CD8-positive, alpha-beta memory T cell (primary cell): ENCODE measurements at regions of chr15 and their contacts with region 1.

Region 1: DNA sequence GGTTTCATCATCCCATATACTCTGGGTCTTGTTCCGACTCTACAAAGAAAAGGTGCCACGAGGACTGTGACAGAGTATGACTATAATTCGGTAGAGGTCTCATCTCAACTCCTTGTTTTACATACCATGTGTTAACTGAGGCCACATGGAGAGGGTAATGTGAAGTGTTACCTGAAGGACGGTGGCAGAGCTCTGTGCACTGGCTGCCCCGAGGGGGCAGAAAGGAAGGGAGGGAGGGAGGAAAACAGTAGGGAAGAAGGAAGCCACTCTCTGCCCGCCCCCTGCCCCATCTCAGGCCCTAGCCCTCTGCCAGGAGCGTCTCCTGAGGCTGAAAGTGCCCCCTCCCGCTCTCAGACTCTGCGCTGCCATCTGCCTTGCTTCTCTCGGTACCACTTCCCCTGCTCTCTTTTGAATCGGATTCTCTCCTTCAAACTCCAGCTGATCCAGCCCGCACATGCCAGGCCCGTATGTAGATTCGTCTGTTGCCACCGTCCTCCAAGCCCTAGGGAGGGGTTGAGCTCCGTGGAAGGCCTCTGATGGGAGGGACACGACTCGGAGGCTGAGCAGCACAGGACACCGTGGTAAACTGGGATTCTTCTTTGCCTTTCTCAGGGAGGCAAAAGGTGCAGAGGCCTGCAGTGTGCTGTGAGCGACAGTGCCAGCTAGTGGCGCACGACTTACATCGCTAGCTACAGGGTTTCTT is 70.5 kb upstream of the ATP10A start:
- DNase-seq: peak; percentile 25 to 77 (median 51)
- H3K4me3 ChIP-seq: peak overlapping the region; percentile 62
- H3K4me3 Mint-ChIP-seq: peak overlapping the region; percentile 76 to 93 (median 85)
- H3K27ac ChIP-seq: no peak overlapping the region
- H3K27ac Mint-ChIP-seq: peak overlapping the region in 1 of 8 donors; percentile 73
- H3K4me1 ChIP-seq: no peaks in the 10 kb centered on the region
- H3K4me1 Mint-ChIP-seq: peaks cover 3 to 7% (median 7%) of the 10 kb centered on the region in 3 donors
- H3K27me3 ChIP-seq: no peaks in the 10 kb centered on the region
- H3K27me3 Mint-ChIP-seq: peaks cover 5 to 9% of the 10 kb centered on the region in 2 donors

Region 2: GRCh38 chr15:25693321-25694237 is 240.0 kb before region 1 on chr15:
- CTCF ChIA-PET with region 1: interaction called, 11 read pairs
- POLR2A ChIA-PET with region 1: no interaction called
- DNase-seq: peak in 2 of 5 donors; percentile 7 to 11
- H3K4me3 ChIP-seq: no peak overlapping the region
- H3K4me3 Mint-ChIP-seq: no peak overlapping the region
- H3K27ac ChIP-seq: no peak overlapping the region
- H3K27ac Mint-ChIP-seq: no peak overlapping the region
- H3K4me1 ChIP-seq: no peaks in the 10 kb centered on the region
- H3K4me1 Mint-ChIP-seq: no peaks in the 10 kb centered on the region
- H3K27me3 ChIP-seq: no peaks in the 10 kb centered on the region
- H3K27me3 Mint-ChIP-seq: no peaks in the 10 kb centered on the region

Region 3: DNA sequence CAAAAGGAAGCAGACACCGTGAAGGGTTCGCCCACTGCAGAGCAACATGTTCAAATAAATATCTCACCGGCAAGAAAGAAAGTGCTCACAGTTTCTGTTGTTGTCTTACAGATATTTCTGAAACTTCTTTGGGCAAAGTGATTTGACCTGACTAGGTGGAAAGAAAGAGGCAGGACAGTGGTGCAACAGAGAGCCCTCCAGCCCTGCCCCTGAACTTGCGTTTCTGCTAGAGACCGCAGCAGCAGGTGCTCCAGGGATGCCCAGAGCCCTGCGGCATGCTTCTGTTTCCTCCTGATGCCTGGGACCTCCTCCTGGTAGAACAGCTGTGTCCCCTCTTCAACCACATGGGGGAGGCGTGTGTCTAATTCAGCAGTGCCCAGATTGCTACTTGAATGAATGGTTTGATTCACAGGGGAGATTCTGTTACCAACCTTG is 193.9 kb before region 1 on chr15:
- CTCF ChIA-PET with region 1: interaction called, 10 read pairs
- POLR2A ChIA-PET with region 1: no interaction called
- DNase-seq: peak in 2 of 5 donors; percentile 21 to 42
- H3K4me3 ChIP-seq: no peak overlapping the region
- H3K4me3 Mint-ChIP-seq: no peak overlapping the region
- H3K27ac ChIP-seq: no peak overlapping the region
- H3K27ac Mint-ChIP-seq: peak overlapping the region in 2 of 8 donors; percentile 17 to 31
- H3K4me1 ChIP-seq: no peaks in the 10 kb centered on the region
- H3K4me1 Mint-ChIP-seq: peaks cover 12 to 36% (median 18%) of the 10 kb centered on the region in 3 donors
- H3K27me3 ChIP-seq: no peaks in the 10 kb centered on the region
- H3K27me3 Mint-ChIP-seq: peaks cover 0 to 3% of the 10 kb centered on the region in 2 donors

Region 4: DNA sequence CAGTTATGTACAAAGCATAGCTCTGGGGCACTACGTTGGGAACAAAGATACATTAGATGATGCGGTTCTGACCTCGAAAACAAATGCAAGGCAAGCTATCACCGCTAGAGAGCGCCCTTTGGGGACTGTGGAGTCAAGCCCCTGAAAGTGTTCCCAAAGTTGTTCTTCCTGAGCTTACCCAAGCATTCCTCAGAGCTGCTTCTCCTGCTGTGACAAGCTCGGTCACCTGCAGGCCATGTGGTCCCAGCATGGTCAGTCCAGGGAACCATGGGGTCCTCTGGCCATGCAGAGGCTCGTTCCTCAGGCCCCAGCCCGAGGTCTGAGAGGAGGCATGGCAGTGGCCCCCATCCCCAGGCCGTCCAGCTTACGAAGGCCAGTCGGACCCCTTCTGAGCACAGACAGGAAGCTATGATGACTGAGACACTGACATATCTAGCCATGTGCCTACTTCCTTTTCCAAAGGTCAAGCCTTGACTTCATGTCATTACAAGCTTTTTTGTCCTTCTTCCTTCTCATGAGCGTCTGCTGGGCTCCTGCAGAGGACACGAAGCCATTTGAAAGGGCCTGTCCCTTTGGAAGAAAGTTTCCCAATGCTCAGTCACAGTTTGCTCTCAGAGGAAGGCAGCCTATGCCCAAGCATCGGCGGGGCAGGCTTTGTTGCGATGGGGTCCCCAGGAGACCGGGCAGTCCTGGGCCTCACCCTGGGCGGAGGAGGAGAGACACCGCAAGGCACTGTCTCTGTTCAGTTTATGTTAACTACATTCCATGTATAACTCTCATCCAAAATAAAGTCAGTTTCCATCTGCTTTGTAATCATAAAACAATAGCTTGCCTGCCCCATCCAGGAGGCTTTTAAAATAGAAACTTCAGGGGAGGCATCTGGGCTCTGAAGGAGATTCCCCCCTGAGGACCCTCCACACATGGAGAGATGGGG is 149.7 kb before region 1 on chr15:
- CTCF ChIA-PET with region 1: interaction called, 24 read pairs
- POLR2A ChIA-PET with region 1: no interaction called
- DNase-seq: peak in 4 of 5 donors; percentile 10 to 55 (median 22)
- H3K4me3 ChIP-seq: no peak overlapping the region
- H3K4me3 Mint-ChIP-seq: no peak overlapping the region
- H3K27ac ChIP-seq: no peak overlapping the region
- H3K27ac Mint-ChIP-seq: no peak overlapping the region
- H3K4me1 ChIP-seq: peaks cover 8% of the 10 kb centered on the region
- H3K4me1 Mint-ChIP-seq: peaks cover 16 to 36% (median 21%) of the 10 kb centered on the region in 3 donors
- H3K27me3 ChIP-seq: no peaks in the 10 kb centered on the region
- H3K27me3 Mint-ChIP-seq: no peaks in the 10 kb centered on the region

Region 5: DNA sequence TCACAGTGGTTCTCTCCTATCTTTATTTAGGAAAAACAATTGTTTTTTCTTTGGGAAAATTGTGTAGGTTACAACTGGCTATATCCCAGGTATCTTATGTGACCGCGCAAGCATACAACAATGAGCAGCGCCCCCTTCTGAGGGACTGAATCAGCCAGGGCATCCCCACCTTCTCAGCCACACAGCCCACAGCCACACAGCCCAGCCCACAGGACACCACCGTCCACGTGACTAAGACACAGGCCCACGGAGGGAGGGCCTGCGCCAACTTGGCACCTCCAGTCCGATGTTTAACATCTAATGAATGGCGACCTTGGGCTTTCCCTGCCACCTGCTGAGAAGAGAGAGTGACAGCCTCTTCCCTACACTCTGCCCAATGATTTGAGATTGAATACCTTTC is 138.5 kb before region 1 on chr15:
- CTCF ChIA-PET with region 1: interaction called, 12 read pairs
- POLR2A ChIA-PET with region 1: no interaction called
- DNase-seq: no peak
- H3K4me3 ChIP-seq: no peak overlapping the region
- H3K4me3 Mint-ChIP-seq: no peak overlapping the region
- H3K27ac ChIP-seq: no peak overlapping the region
- H3K27ac Mint-ChIP-seq: peak overlapping the region in 2 of 8 donors; percentile 12 to 41
- H3K4me1 ChIP-seq: peaks cover 18% of the 10 kb centered on the region
- H3K4me1 Mint-ChIP-seq: peaks cover 27 to 68% (median 36%) of the 10 kb centered on the region in 3 donors
- H3K27me3 ChIP-seq: no peaks in the 10 kb centered on the region
- H3K27me3 Mint-ChIP-seq: peaks cover 0 to 7% of the 10 kb centered on the region in 2 donors

Region 6: DNA sequence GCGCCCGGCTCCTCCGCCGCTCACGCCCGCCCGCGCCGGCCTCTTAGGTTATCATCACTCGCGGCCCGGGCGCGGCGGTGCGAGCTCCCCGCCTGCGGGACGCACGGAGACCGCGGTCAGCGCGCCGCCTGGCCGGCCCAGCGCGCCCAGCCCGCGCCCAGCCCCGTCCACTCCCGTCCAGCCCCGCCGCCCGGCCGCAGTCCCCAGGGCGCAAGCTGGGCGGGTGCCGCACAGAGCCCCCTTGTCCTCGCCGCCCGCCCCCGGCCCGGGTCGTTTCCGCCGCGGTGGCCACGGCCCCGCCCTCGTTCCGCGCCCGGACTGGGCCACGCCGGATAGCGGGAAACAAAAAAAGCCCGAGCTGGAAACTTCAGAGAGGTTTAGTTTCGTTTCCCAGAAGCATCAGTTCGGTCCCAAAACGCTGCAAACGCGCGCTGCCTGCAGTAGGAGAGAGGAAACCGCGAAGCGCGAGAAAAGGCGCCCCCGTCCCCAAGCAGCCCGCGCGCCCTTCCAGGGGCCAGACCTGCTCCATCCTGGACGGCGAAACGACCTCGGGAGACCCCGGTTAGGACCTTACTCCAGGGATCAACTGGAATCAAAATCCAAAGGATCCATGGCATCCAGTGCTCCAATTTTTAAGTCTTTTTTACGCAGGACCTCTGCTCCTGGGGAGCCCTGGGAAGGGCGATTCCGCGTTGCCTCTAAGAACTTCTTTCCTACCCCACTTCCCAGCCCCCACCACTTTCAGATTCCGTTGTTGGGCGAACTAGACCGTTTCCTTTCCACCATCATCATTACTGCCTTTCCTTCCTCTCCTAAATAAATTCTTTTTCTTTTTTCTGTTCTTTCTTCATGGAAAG is 70.3 kb before region 1 on chr15 and contains the start of gene ATP10A:
- CTCF ChIA-PET with region 1: interaction called, 11 read pairs
- POLR2A ChIA-PET with region 1: interaction called, 3 read pairs
- DNase-seq: peak in 4 of 5 donors; percentile 31 to 59 (median 40)
- H3K4me3 ChIP-seq: peak within 1 kb of the TSS; percentile 77
- H3K4me3 Mint-ChIP-seq: peak within 1 kb of the TSS; percentile 88 to 99 (median 94)
- H3K27ac ChIP-seq: peak within 1 kb of the TSS; percentile 48
- H3K27ac Mint-ChIP-seq: peak within 1 kb of the TSS; percentile 93 to 99 (median 96)
- H3K4me1 ChIP-seq: peaks cover 27% of the 10 kb centered on the region
- H3K4me1 Mint-ChIP-seq: peaks cover 38 to 45% (median 41%) of the 10 kb centered on the region in 3 donors
- H3K27me3 ChIP-seq: no peaks in the 10 kb centered on the region
- H3K27me3 Mint-ChIP-seq: peaks cover 0 to 4% of the 10 kb centered on the region in 2 donors
- total RNA-seq, gene ATP10A: 24.0 to 28.9 TPM

Region 7: GRCh38 chr15:25944386-25944785 is 10.8 kb after region 1 on chr15:
- CTCF ChIA-PET with region 1: interaction called, 13 read pairs
- POLR2A ChIA-PET with region 1: no interaction called
- DNase-seq: no peak
- H3K4me3 ChIP-seq: no peak overlapping the region
- H3K4me3 Mint-ChIP-seq: no peak overlapping the region
- H3K27ac ChIP-seq: no peak overlapping the region
- H3K27ac Mint-ChIP-seq: no peak overlapping the region
- H3K4me1 ChIP-seq: no peaks in the 10 kb centered on the region
- H3K4me1 Mint-ChIP-seq: no peaks in the 10 kb centered on the region
- H3K27me3 ChIP-seq: no peaks in the 10 kb centered on the region
- H3K27me3 Mint-ChIP-seq: peaks cover 0 to 3% of the 10 kb centered on the region in 2 donors

Region 8: GRCh38 chr15:26001201-26001600 is 67.6 kb after region 1 on chr15:
- CTCF ChIA-PET with region 1: no interaction called
- POLR2A ChIA-PET with region 1: no interaction called
- DNase-seq: no peak
- H3K4me3 ChIP-seq: no peak overlapping the region
- H3K4me3 Mint-ChIP-seq: no peak overlapping the region
- H3K27ac ChIP-seq: no peak overlapping the region
- H3K27ac Mint-ChIP-seq: no peak overlapping the region
- H3K4me1 ChIP-seq: no peaks in the 10 kb centered on the region
- H3K4me1 Mint-ChIP-seq: no peaks in the 10 kb centered on the region
- H3K27me3 ChIP-seq: no peaks in the 10 kb centered on the region
- H3K27me3 Mint-ChIP-seq: peaks cover 0 to 8% of the 10 kb centered on the region in 2 donors

Region 9: DNA sequence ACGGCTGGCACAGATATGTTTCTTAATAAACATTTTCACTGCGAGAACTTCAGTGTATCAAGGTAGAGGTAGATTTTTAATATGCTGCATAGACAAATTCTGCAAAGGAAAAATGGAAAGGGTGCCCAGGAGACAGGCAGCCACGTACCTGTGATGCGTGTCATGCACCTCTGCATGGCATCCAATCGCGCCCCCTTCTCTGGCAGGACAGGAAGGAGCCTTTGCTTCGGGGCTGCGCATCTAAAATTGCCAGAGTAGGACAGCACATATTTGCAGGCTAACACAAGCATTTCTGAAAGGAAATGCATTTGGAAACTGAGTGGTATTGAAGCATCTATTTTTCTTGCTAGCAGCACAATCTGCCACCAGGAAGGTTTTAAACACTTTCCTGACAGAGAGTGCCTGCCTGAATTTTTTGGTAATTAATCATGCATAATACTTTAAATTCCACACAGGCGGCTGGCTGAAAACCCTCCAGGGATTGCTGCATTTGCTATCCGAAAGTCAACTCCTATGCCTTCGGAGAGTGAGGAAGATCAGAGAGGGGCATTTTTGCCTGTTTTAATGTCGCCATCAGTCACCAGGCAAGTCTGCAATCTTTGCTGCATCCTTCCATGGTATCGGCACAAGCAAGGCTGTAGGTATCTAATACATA is 94.6 kb after region 1 on chr15:
- CTCF ChIA-PET with region 1: no interaction called
- POLR2A ChIA-PET with region 1: no interaction called
- DNase-seq: no peak
- H3K4me3 ChIP-seq: no peak overlapping the region
- H3K4me3 Mint-ChIP-seq: no peak overlapping the region
- H3K27ac ChIP-seq: no peak overlapping the region
- H3K27ac Mint-ChIP-seq: no peak overlapping the region
- H3K4me1 ChIP-seq: no peaks in the 10 kb centered on the region
- H3K4me1 Mint-ChIP-seq: no peaks in the 10 kb centered on the region
- H3K27me3 ChIP-seq: no peaks in the 10 kb centered on the region
- H3K27me3 Mint-ChIP-seq: peaks cover 6 to 9% of the 10 kb centered on the region in 2 donors

Region 10: GRCh38 chr15:27412415-27412814 is 1478.8 kb after region 1 on chr15:
- CTCF ChIA-PET with region 1: no interaction called
- POLR2A ChIA-PET with region 1: no interaction called
- DNase-seq: no peak
- H3K4me3 ChIP-seq: no peak overlapping the region
- H3K4me3 Mint-ChIP-seq: no peak overlapping the region
- H3K27ac ChIP-seq: no peak overlapping the region
- H3K27ac Mint-ChIP-seq: no peak overlapping the region
- H3K4me1 ChIP-seq: no peaks in the 10 kb centered on the region
- H3K4me1 Mint-ChIP-seq: no peaks in the 10 kb centered on the region
- H3K27me3 ChIP-seq: no peaks in the 10 kb centered on the region
- H3K27me3 Mint-ChIP-seq: no peaks in the 10 kb centered on the region